Calu3 (cell line): ENCODE measurements at regions of chrX and their contacts with region 1.

Region 1: GRCh38 chrX:129931411-129932015 is 25.5 kb downstream of the UTP14A start:
- DNase-seq: peak; percentile 81
- H3K4me3 Mint-ChIP-seq: peak overlapping the region; percentile 66
- H3K27ac Mint-ChIP-seq: peak overlapping the region; percentile 77
- H3K4me1 Mint-ChIP-seq: peaks cover 9% of the 10 kb centered on the region
- H3K27me3 Mint-ChIP-seq: peaks cover 27% of the 10 kb centered on the region
- CTCF ChIP-seq: no peak

Region 2: GRCh38 chrX:129982274-129983251 is 51.0 kb after region 1 on chrX and contains the start of gene BCORL1:
- CTCF ChIA-PET with region 1: no interaction called
- intact Hi-C with region 1: loop called (anchors 10 kb)
- DNase-seq: peak; percentile 86
- H3K4me3 Mint-ChIP-seq: no peak within 1 kb of the TSS
- H3K27ac Mint-ChIP-seq: peak within 1 kb of the TSS; percentile 52
- H3K4me1 Mint-ChIP-seq: peaks cover 12% of the 10 kb centered on the region
- H3K27me3 Mint-ChIP-seq: peaks cover 41% of the 10 kb centered on the region
- CTCF ChIP-seq: no peak
- total RNA-seq, gene BCORL1: 6.7 and 10.1 TPM in 2 replicates

Region 3: DNA sequence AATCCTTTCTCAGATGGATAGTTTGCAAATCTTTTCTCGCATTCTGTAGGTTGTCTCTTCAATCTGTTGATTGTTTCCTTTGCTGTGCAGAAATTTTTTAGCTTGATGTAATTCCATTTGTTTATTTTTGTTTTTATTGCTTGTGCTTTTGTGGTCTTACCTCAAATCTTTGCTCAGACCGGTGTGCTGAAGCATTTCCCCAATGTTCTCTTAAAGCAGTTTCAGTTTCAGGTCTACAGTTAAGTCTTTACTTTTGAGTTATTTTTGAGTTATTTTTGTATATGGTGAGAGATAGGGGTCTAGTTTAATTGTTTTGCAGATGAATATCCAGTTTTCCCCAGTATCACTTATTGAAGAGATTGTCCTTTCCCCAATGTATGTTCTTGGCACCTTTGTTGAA is 390.0 kb after region 1 on chrX:
- CTCF ChIA-PET with region 1: no interaction called
- intact Hi-C with region 1: no loop called
- DNase-seq: no peak
- H3K4me3 Mint-ChIP-seq: no peak overlapping the region
- H3K27ac Mint-ChIP-seq: no peak overlapping the region
- H3K4me1 Mint-ChIP-seq: no peaks in the 10 kb centered on the region
- H3K27me3 Mint-ChIP-seq: peaks cover 59% of the 10 kb centered on the region
- CTCF ChIP-seq: no peak

Region 4: GRCh38 chrX:130378008-130378669 is 446.6 kb after region 1 on chrX:
- CTCF ChIA-PET with region 1: no interaction called
- intact Hi-C with region 1: no loop called
- DNase-seq: no peak
- H3K4me3 Mint-ChIP-seq: no peak overlapping the region
- H3K27ac Mint-ChIP-seq: no peak overlapping the region
- H3K4me1 Mint-ChIP-seq: no peaks in the 10 kb centered on the region
- H3K27me3 Mint-ChIP-seq: peaks cover 14% of the 10 kb centered on the region
- CTCF ChIP-seq: no peak